HAP-1 (cell line): ENCODE measurements at regions of chr10 and their contacts with region 1.

Region 1: GRCh38 chr10:103712570-103713498 is 142.5 kb downstream of the SH3PXD2A start:
- DNase-seq: peak; percentile 52 to 89
- H3K4me3 ChIP-seq: no peak overlapping the region
- H3K4me1 ChIP-seq: no peaks in the 10 kb centered on the region
- H3K27me3 ChIP-seq: no peaks in the 10 kb centered on the region

Region 2: DNA sequence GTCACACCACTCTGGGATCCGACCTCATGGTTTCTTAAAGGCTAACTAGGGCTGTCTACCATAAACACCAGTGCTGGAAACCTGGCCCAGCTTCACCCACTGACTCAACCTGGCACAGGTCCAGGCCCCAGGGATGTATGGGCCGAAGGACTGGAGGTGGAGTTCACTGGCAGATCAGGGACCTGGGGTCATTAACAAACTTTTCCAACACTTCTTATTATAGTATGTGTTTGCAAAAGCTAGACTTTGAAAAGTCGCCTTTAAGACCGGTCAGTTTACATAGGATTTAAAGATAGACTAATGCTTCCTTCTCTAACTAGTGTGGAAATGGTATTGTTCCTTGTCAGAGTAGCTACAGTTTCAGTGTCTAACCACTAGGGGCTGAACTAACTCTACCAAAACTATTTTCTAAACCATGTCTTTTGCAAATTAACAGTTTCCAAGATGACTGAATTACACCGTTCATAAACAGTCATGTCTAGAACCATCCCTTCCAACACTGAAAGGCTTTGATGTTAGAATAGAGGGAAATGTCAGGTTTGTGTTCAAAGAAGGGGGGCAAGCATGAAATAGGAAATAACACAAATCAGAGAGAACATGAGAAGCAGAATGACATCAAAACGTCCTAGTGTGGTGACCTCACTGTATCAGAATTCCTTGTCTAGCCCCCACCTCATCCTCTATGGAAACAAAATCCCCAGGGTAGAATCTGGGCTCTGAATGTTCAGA is 175.4 kb after region 1 on chr10:
- in situ Hi-C with region 1: loop called (anchors 5 kb)
- DNase-seq: peak; percentile 22 to 64
- H3K4me3 ChIP-seq: no peak overlapping the region
- H3K4me1 ChIP-seq: no peaks in the 10 kb centered on the region
- H3K27me3 ChIP-seq: no peaks in the 10 kb centered on the region

Region 3: DNA sequence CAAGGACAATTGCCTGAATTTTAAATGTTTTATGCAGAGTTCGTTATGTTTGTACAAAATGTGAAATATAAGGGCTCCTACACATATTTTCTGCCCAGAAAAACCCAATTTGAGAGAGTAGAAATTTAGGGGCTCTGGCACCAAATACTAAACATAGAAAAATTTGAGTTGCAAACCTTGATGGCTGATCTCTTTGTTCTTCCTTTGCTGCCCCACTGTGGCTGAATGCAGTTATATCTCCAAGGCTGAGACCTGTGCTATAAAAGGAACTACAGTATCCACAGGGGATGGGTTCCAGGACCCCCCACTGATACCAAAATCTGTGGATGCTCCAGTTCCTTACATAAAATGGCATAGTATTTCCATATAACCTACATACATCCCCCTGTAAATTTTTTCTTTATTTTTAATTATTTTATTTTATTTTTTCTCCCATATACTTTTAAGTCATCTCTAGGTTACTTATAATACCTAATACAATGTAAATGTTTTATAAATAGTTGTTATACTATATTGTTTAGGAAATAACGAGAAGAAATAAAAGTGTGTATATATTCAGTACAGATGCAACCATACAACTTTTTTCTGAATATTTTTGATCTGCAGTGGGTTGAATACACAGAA is 496.9 kb after region 1 on chr10:
- in situ Hi-C with region 1: loop called (anchors 25 kb)
- DNase-seq: peak; percentile 40 to 52
- H3K4me3 ChIP-seq: no peak overlapping the region
- H3K4me1 ChIP-seq: no peaks in the 10 kb centered on the region
- H3K27me3 ChIP-seq: peaks cover 38% of the 10 kb centered on the region